Caco-2 (cell line): ENCODE measurements at regions of chr11 and their contacts with region 1.

Region 1: GRCh38 chr11:107834995-107835394 is 23.6 kb downstream of the SLC35F2 start:
- DNase-seq: peak in 1 of 2 experiments; percentile 47
- H3K4me3 ChIP-seq: no peak overlapping the region
- H3K4me3 Mint-ChIP-seq: no peak overlapping the region
- H3K27ac Mint-ChIP-seq: no peak overlapping the region
- H3K4me1 ChIP-seq: peaks cover 42% of the 10 kb centered on the region
- H3K4me1 Mint-ChIP-seq: peaks cover 44% of the 10 kb centered on the region
- H3K27me3 ChIP-seq: no peaks in the 10 kb centered on the region
- H3K27me3 Mint-ChIP-seq: no peaks in the 10 kb centered on the region
- CTCF ChIP-seq: peak in 1 of 2 experiments; percentile 42

Region 2: GRCh38 chr11:107858217-107859070 is 23.4 kb after region 1 on chr11 and contains the start of gene SLC35F2:
- CTCF ChIA-PET with region 1: no interaction called
- POLR2A ChIA-PET with region 1: no interaction called
- intact Hi-C with region 1: loop called (anchors 1 kb)
- DNase-seq: peak; percentile 90 to 91
- H3K4me3 ChIP-seq: peak within 1 kb of the TSS; percentile 50
- H3K4me3 Mint-ChIP-seq: peak within 1 kb of the TSS; percentile 93
- H3K27ac Mint-ChIP-seq: peak within 1 kb of the TSS; percentile 85
- H3K4me1 ChIP-seq: peaks cover 5% of the 10 kb centered on the region
- H3K4me1 Mint-ChIP-seq: peaks cover 7% of the 10 kb centered on the region
- H3K27me3 ChIP-seq: no peaks in the 10 kb centered on the region
- H3K27me3 Mint-ChIP-seq: no peaks in the 10 kb centered on the region
- CTCF ChIP-seq: peak in 1 of 2 experiments; percentile 24
- total RNA-seq, gene SLC35F2: 42.5 and 44.9 TPM in 2 replicates